Tibial artery (tissue), 4 donors: ENCODE measurements at regions of chr1 and their contacts with region 1.

Region 1: DNA sequence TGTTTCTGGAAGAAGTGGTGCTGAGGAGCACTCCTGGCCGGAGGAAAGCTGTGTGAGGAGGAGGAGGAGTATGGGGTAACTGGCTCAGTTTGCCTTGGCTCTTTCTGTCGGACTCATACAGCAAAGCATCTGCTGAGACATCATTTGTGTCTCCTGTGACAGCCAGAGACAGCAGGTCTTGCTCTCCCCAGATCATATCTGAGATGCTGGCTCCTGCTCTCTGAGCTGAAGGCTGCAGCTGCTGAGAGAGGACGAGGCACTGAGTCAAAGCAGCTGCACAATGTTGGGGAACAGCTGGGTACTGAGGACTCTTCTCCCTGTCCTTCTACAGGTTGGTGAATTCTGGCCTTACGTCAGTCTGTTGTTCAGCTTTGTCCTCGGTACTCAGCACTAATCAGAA is 14.3 kb downstream of the OR2B11 start:
- DNase-seq: no peak
- H3K4me3 ChIP-seq: no peak overlapping the region
- H3K27ac ChIP-seq: no peak overlapping the region
- H3K4me1 ChIP-seq: no peaks in the 10 kb centered on the region
- H3K27me3 ChIP-seq: peaks cover 0 to 2% of the 10 kb centered on the region in 2 donors
- CTCF ChIP-seq: no peak

Region 2: GRCh38 chr1:247390116-247390791 is 53.4 kb before region 1 on chr1:
- intact Hi-C with region 1: loop called (anchors 2 kb)
- DNase-seq: peak; percentile 68 to 85
- H3K4me3 ChIP-seq: peak overlapping the region; percentile 23 to 27
- H3K27ac ChIP-seq: no peak overlapping the region
- H3K4me1 ChIP-seq: peaks cover 0 to 5% (median 2%) of the 10 kb centered on the region in 4 donors
- H3K27me3 ChIP-seq: no peaks in the 10 kb centered on the region
- CTCF ChIP-seq: peak; percentile 72 to 81

Region 3: DNA sequence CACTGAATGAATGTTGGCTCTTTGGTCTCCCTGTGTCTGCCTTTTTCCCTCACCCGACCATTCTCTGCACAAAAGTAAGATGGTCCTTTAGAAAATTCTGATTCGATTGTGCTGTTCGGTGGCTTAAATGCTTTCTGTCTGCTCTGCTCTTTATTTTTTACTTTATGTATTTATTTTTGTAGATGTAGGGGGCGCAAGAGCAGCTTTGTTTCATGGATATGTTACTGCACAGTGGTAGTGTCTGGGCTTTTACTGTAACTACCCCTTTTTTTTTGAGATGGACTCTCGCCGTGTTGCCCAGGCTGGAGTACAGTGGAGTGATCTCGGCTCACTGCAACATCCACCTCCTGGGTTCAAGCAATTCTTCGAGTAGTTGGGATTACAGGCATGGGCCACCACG is 12.0 kb before region 1 on chr1:
- intact Hi-C with region 1: no loop called
- DNase-seq: no peak
- H3K4me3 ChIP-seq: no peak overlapping the region
- H3K27ac ChIP-seq: no peak overlapping the region
- H3K4me1 ChIP-seq: no peaks in the 10 kb centered on the region
- H3K27me3 ChIP-seq: peaks cover 0 to 5% of the 10 kb centered on the region in 2 donors
- CTCF ChIP-seq: no peak